Astrocyte of the cerebellum (primary cell): ENCODE measurements at regions of chr1 and their contacts with region 1.

Region 1: GRCh38 chr1:116151739-116152576 is 40.8 kb downstream of the MAB21L3 start:
- DNase-seq: peak; percentile 33
- H3K4me3 ChIP-seq: peak overlapping the region; percentile 42
- CTCF ChIP-seq: peak; percentile 84

Region 2: DNA sequence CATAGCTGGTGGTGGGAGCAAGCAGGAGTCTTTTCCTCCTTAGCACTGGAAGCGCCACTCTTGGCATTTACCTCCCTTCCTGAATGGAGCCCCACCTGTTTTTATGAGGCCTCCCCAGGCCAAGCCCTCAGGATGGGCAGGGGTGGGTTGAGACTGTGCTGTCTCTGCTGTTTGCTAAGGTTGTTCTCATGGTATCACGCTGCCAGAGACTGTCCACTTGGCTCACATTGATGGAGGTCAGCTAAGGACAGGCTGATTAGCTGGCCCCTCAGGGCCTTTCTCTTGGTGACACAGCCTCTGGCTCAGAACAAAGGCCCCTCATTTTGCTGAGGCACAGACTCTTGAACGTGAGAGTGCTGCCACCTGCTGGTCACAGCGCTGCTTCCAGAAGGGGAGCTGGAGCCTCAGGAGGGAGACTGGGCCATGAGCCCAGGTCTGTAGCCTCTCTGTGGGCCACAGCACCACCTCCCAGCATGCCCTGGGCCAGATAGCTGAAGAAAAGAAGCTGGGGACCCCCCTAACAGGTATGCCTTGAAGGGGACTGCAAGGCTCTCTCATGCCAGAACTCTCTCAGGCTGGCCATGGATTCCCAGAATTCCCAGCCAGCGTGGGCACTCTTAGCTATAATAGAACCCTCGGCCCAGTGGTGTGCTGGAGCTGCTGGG is 333.2 kb after region 1 on chr1:
- in situ Hi-C with region 1: loop called (anchors 25 kb)
- DNase-seq: peak; percentile 61
- H3K4me3 ChIP-seq: no peak overlapping the region
- CTCF ChIP-seq: peak; percentile 86